ENCODE measurements at regions of chr16 and their contacts with region 1.

Region 1: DNA sequence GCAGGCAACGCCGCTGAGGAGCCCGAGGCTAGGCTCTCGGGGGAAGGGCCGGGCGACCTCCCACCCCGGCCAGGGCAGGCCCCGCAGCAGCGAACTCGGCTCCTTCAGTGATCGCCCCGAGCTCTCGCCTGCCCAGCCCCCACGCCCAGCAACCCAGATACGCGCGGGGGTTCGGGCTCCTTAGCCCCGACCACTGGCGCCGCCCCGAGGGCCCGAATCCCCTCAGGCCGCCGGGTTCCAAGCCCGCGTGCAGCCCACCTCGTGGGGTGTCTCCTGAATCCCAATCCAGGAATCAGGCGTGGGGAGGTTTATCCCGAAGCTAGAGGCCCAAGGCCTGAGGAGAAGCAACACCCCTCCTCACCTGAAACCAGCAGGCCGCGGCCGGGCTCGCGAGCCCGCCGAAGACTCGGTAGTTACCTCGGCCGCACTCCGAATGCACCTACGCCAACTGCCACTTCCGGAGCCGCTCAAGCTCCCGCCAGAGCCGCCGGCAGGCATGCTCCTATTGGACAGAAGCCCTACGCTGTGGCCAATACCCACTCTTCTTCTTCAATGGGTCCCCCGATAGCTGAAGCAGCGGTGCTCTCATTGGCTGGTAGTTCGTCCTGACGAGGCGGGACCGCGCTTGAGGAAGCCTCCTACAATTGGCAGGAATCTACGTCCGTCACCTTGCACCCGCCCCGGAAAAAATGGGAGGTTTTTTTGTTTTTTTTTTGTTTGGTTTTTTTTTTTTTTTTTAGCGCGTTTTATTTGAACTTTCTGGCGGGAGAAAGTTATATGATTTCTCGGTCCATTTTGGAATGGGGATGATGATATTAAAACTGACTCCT is at the start of gene RFWD3:
- DNase-seq: peak; percentile 92 to 99
- ATAC-seq: peak; percentile 98 to 100 (median 99)
- H3K4me3 ChIP-seq: peak within 1 kb of the TSS; percentile 79
- H3K4me3 Mint-ChIP-seq: peak within 1 kb of the TSS; percentile 99
- H3K27ac ChIP-seq: peak within 1 kb of the TSS; percentile 63
- H3K27ac Mint-ChIP-seq: peak within 1 kb of the TSS; percentile 92 to 93
- H3K4me1 ChIP-seq: peaks cover 19% of the 10 kb centered on the region
- H3K4me1 Mint-ChIP-seq: peaks cover 23 to 34% of the 10 kb centered on the region in 2 donors
- H3K27me3 ChIP-seq: no peaks in the 10 kb centered on the region
- H3K27me3 Mint-ChIP-seq: no peaks in the 10 kb centered on the region
- CTCF ChIP-seq: no peak
- total RNA-seq, gene RFWD3: 41.1 to 53.4 (median 47.5) TPM

Region 2: GRCh38 chr16:74700438-74701225 is 34.0 kb after region 1 on chr16 and contains the start of gene MLKL:
- intact Hi-C with region 1: loop called (anchors 2 kb)
- DNase-seq: peak; percentile 73 to 77
- ATAC-seq: peak; percentile 82 to 90 (median 83)
- H3K4me3 ChIP-seq: peak within 1 kb of the TSS; percentile 94
- H3K4me3 Mint-ChIP-seq: peak within 1 kb of the TSS; percentile 100
- H3K27ac ChIP-seq: peak within 1 kb of the TSS; percentile 81
- H3K27ac Mint-ChIP-seq: peak within 1 kb of the TSS; percentile 98 to 99
- H3K4me1 ChIP-seq: peaks cover 25% of the 10 kb centered on the region
- H3K4me1 Mint-ChIP-seq: peaks cover 56 to 57% of the 10 kb centered on the region in 2 donors
- H3K27me3 ChIP-seq: no peaks in the 10 kb centered on the region
- H3K27me3 Mint-ChIP-seq: no peaks in the 10 kb centered on the region
- CTCF ChIP-seq: no peak
- total RNA-seq, gene MLKL: 39.8 to 57.5 (median 52.1) TPM

Measured in natural killer cell (primary cell).